ENCODE measurements at regions of chr1 and their contacts with region 1.

Region 1: DNA sequence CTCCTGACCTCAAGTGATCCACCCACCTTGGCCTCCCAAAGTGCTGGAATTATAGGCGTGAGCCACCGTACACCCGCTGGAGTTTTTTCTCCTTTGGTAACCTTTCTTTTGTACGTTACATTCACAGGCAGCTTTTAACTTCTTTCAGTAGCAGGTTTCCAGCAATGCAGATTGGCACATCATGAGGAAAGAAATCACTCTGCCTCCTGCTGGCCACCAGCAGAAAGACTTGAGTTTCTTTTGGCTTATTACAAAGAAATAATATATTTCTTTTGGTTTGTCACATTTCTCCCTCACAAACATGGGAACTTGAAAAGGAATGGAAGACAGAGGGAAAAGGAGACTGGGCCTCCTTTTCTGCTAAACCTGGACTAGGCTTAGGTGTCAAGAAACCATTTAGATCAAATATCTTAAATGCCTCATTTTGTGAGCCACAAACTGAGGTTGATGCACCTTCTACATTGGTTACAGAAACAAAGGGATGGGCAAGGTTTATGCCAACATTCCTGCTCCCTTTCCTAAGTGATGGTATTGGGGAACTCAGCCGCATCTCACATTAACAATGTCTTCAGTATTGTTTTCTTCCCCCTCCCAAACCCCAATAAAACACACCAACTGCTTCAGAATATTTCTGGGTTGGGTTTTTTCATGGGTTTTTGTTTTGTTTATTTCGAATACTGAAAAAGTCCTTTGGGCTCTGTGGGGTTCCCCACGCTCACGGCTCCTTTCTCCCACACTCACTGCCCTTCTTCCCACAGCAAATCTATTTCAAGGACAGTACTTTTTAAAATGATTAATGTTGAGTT is 7.7 kb downstream of the ENSA start:
- DNase-seq: peak in 2 of 3 donors; percentile 37 to 73
- ATAC-seq: no peak
- H3K4me3 ChIP-seq: no peak overlapping the region
- H3K27ac ChIP-seq: peak overlapping the region; percentile 58
- H3K4me1 ChIP-seq: peaks cover 5% of the 10 kb centered on the region
- H3K27me3 ChIP-seq: no peaks in the 10 kb centered on the region

Region 2: GRCh38 chr1:150076066-150076465 is 545.6 kb before region 1 on chr1:
- intact Hi-C with region 1: no loop called
- DNase-seq: no peak
- ATAC-seq: no peak
- H3K4me3 ChIP-seq: no peak overlapping the region
- H3K27ac ChIP-seq: no peak overlapping the region
- H3K4me1 ChIP-seq: peaks cover 1% of the 10 kb centered on the region
- H3K27me3 ChIP-seq: no peaks in the 10 kb centered on the region

Region 3: GRCh38 chr1:150578965-150579798 is 42.5 kb before region 1 on chr1 and contains the start of gene MCL1:
- intact Hi-C with region 1: loop called in 2 of 4 experiments (anchors 5 kb)
- DNase-seq: peak; percentile 94 to 98 (median 97)
- ATAC-seq: peak; percentile 89 to 97
- H3K4me3 ChIP-seq: peak within 1 kb of the TSS; percentile 99
- H3K27ac ChIP-seq: peak within 1 kb of the TSS; percentile 100
- H3K4me1 ChIP-seq: peaks cover 3% of the 10 kb centered on the region
- H3K27me3 ChIP-seq: no peaks in the 10 kb centered on the region
- total RNA-seq, gene MCL1: 65.5 to 130 (median 80.2) TPM

Region 4: GRCh38 chr1:151156515-151156819 is 534.8 kb after region 1 on chr1 and contains the start of gene TNFAIP8L2:
- intact Hi-C with region 1: no loop called
- DNase-seq: peak; percentile 51 to 84 (median 84)
- ATAC-seq: peak; percentile 50 to 60
- H3K4me3 ChIP-seq: peak within 1 kb of the TSS; percentile 27
- H3K27ac ChIP-seq: peak within 1 kb of the TSS; percentile 15
- H3K4me1 ChIP-seq: no peaks in the 10 kb centered on the region
- H3K27me3 ChIP-seq: no peaks in the 10 kb centered on the region
- total RNA-seq, gene TNFAIP8L2: 1.8 to 3.7 (median 2.3) TPM

Measured in right cardiac atrium (tissue), 5 donors.